ENCODE measurements at regions of chr3 and their contacts with region 1.

Region 1: DNA sequence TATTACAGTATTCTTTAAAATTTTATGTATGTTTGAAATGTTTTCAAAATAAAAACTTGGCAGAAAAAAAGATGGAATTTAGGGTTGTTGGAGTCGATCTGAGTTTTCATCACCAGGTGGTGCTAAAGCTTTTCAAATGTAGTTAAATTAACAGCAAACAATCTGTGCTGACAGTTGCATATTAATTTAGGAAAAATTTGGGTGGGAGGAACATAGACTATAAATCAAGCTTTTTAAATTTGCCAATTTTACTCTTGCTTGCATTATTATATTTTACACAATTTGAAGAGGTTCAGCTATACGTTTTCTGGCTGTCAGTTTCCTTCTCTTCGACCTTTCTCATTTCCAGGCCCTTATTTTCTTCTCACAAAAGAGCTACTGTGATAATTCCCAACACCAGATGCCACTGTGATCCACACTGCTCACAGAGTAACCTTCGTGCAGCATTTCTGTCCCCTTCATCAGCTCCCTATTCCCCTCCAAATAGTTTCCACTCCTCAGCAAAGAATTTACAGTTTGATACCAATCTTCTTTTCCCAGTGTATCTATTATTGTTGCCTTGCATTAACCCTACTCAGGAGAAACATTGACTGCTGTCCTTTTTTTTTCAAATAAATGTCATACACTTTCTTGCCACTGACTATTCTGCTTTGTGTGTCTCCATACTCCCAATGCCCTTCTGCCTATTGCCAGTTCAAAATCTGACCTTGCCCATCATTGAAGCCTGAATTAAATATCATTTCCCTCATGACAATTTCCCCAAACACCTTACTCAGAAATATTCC is 53.4 kb upstream of the EIF5A2 start:
- DNase-seq: no peak
- H3K4me3 ChIP-seq: no peak overlapping the region
- CTCF ChIP-seq: peak; percentile 27

Region 2: DNA sequence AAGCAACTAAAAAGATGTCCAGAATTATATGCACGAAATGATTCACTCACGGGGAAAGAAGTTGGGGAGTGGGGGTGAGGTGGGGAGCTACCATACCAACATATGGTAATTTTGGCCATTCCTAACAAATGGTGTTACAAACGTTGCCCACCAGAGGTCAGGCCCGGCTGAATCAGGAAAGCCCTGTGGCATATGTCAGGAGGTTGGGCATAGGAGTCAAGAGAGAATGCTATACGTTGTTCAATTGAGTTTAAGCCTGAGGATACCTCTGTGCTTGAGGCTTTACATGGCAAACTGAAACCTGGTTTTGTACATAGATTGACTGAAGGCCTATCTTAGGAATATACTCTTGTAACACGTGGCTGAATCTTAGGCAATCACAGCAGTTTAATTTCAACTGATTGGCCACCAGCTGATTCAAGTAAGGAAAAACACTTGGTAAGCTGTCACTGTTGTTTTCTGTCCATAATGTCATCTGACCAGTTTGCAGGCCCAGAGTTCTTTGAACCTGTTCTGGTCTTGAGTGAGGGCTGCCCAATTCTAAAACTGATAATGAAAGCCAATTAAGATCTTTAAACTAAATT is 88.1 kb after region 1 on chr3:
- CTCF ChIA-PET with region 1: interaction called, 25 read pairs
- POLR2A ChIA-PET with region 1: no interaction called
- DNase-seq: no peak
- H3K4me3 ChIP-seq: no peak overlapping the region
- CTCF ChIP-seq: peak; percentile 66

Region 3: DNA sequence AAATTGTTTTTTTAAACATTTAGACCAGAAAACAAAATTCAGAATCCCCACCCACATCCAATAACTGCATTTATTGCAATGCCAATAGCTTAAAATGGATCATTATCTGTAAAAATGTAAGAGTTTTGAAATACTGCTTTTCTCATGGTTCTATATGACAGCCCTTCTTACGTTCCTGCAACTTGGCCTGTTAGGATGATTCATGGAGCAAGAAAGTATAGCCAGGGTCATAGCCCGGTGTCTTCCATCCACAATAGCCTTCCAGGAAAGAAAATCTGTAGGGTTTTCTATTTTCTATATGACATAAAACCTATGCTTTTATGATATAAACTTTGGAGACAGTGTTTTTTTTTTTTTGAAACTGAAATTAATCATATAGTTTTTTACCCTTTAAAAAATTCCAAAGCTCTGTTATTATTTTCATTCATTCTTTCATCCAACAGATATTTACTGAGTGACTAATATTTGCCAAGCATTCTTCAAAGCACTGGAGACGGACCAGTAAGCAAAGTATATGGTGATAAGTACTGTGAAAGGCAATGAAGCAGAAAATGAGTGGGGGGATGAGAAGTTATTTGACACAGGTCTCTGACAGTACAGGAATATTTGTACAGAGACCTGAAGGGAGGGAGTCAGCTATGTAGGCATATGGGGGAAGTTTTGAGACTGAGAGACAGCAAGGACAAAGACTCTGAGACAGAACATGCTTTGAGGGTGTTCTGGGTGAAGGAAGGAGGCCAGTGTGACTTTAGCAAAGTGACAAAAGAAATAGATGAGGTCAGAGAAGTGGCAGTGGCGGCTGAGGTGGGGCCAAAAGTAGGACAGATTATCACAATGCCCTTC is 93.7 kb after region 1 on chr3:
- CTCF ChIA-PET with region 1: interaction called, 25 read pairs
- POLR2A ChIA-PET with region 1: no interaction called
- DNase-seq: no peak
- H3K4me3 ChIP-seq: no peak overlapping the region
- CTCF ChIP-seq: no peak

Region 4: GRCh38 chr3:171168086-171168485 is 206.3 kb after region 1 on chr3:
- CTCF ChIA-PET with region 1: interaction called, 26 read pairs
- POLR2A ChIA-PET with region 1: no interaction called
- DNase-seq: no peak
- H3K4me3 ChIP-seq: no peak overlapping the region
- CTCF ChIP-seq: peak; percentile 68

Region 5: GRCh38 chr3:171187706-171188290 is 226.0 kb after region 1 on chr3:
- CTCF ChIA-PET with region 1: interaction called, 23 read pairs
- POLR2A ChIA-PET with region 1: no interaction called
- DNase-seq: no peak
- H3K4me3 ChIP-seq: no peak overlapping the region
- CTCF ChIP-seq: peak; percentile 59

Measured in AG04449 (cell line).